Psoas muscle (tissue), 8 donors: ENCODE measurements at regions of chr3 and their contacts with region 1.

Region 1: GRCh38 chr3:168213920-168214319 is 118.2 kb upstream of the GOLIM4 start:
- DNase-seq: no peak
- ATAC-seq: no peak
- H3K4me3 ChIP-seq: no peak overlapping the region
- H3K27ac ChIP-seq: no peak overlapping the region
- H3K4me1 ChIP-seq: no peaks in the 10 kb centered on the region
- H3K27me3 ChIP-seq: no peaks in the 10 kb centered on the region
- CTCF ChIP-seq: no peak

Region 2: GRCh38 chr3:167733961-167734497 is 479.9 kb before region 1 on chr3:
- intact Hi-C with region 1: no loop called
- DNase-seq: no peak
- ATAC-seq: no peak
- H3K4me3 ChIP-seq: peak overlapping the region; percentile 81
- H3K27ac ChIP-seq: peak overlapping the region; percentile 90
- H3K4me1 ChIP-seq: peaks cover 24% of the 10 kb centered on the region
- H3K27me3 ChIP-seq: no peaks in the 10 kb centered on the region
- CTCF ChIP-seq: no peak

Region 3: DNA sequence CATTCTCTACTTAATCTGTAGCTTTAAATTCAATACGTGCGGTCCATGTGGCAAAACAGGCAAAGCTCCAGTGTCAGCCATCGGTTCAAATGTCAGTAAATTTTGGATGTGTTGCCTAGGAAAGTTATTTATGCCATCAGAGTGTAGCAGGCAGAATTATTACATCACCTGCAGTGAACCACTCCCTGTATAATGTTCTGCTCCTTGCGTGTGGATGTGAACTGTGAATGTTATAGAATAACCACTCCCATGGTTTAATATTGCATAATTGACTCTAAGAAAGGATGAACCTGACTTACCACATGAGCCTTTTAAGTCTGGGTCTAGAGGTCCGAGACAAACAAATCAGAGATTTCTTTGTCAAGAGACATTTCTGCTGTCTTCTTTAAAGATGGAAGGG is 263.7 kb before region 1 on chr3:
- intact Hi-C with region 1: no loop called
- DNase-seq: no peak
- ATAC-seq: no peak
- H3K4me3 ChIP-seq: no peak overlapping the region
- H3K27ac ChIP-seq: no peak overlapping the region
- H3K4me1 ChIP-seq: no peaks in the 10 kb centered on the region
- H3K27me3 ChIP-seq: no peaks in the 10 kb centered on the region
- CTCF ChIP-seq: no peak

Region 4: GRCh38 chr3:168285506-168285905 is 71.6 kb after region 1 on chr3:
- intact Hi-C with region 1: no loop called
- DNase-seq: no peak
- ATAC-seq: no peak
- H3K4me3 ChIP-seq: no peak overlapping the region
- H3K27ac ChIP-seq: no peak overlapping the region
- H3K4me1 ChIP-seq: no peaks in the 10 kb centered on the region
- H3K27me3 ChIP-seq: no peaks in the 10 kb centered on the region
- CTCF ChIP-seq: no peak

Region 5: DNA sequence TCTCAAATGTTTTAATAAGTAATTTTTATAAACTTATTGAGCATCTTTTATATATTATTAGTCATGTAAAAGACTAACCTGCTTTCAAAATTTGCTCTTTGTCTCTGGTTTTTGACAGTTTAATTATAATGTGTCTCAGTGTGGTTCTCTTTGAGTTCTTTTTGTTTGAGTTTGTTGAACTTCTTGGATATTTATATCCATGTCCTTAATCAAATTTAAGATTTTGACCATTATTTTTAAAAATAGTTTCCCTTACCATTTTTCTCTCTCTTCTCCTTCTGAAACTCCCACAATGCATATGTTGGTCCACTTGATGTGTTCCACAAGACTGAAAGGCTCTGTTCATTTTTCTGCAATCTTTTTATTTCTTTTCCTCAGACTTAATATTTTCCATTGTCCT is 247.9 kb after region 1 on chr3:
- intact Hi-C with region 1: loop called (anchors 5 to 10 kb)
- DNase-seq: no peak
- ATAC-seq: no peak
- H3K4me3 ChIP-seq: no peak overlapping the region
- H3K27ac ChIP-seq: no peak overlapping the region
- H3K4me1 ChIP-seq: no peaks in the 10 kb centered on the region
- H3K27me3 ChIP-seq: no peaks in the 10 kb centered on the region
- CTCF ChIP-seq: no peak

Region 6: DNA sequence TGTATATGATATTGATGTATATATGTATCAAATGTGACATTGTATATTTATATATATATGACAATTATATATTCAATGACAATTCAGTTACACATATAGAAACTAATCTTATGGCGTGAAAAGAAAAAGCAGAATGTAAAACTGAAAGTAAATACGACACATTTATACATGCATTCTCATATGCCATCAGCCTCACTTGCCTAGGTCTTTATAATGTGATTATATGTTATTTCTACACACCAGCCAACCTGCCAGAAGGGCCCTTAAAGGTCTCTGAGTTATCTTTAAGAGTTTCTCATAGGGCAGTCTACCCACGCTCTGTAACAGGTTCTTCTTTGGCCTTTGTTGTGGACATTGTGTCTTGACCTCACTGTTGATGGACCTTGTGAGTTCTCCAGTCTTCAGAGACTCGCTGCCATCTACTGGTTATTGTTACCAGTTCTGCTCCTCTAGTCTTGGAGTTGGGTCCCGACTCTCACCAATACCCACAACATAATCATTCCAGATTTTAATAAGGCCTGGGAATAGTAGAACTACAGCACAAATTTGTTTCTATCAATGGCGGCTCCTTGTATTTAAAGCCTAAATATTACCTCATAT is 253.3 kb after region 1 on chr3:
- intact Hi-C with region 1: loop called (anchors 5 to 10 kb)
- DNase-seq: no peak
- ATAC-seq: peak in 2 of 4 donors; percentile 21 to 45
- H3K4me3 ChIP-seq: no peak overlapping the region
- H3K27ac ChIP-seq: no peak overlapping the region
- H3K4me1 ChIP-seq: no peaks in the 10 kb centered on the region
- H3K27me3 ChIP-seq: no peaks in the 10 kb centered on the region
- CTCF ChIP-seq: peak; percentile 18

Region 7: DNA sequence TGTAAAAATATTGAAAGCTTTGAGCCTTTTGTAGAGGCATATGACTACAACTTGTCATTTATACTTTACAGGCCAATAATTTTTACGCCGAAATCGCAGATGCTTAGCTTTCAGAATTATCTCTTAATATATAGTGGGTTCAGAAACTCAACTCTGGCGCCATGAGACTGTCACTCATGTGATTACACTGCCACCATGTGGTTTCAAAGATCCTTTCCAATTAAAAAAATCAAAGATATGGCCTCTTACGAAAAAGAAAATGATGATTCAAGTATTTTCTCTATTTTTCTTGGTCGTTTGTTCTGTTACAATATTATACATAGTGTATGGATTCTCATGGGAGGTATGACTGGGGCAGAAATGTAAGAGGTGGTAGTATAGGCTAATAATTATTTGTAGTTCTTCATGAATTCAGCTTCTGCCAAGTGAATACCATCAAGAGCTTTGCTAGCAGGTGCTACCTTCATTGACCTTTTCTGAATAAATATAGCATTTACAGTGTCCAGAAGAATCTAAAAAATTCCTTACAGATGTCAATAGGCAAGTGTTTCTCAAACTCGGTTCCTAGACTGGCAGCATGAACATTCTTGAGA is 633.5 kb after region 1 on chr3:
- intact Hi-C with region 1: loop called (anchors 2 to 5 kb)
- DNase-seq: no peak
- ATAC-seq: no peak
- H3K4me3 ChIP-seq: no peak overlapping the region
- H3K27ac ChIP-seq: no peak overlapping the region
- H3K4me1 ChIP-seq: no peaks in the 10 kb centered on the region
- H3K27me3 ChIP-seq: peaks cover 0 to 5% (median 0%) of the 10 kb centered on the region in 3 donors
- CTCF ChIP-seq: peak; percentile 59